Right ventricle myocardium superior (tissue), 1 donor: ENCODE measurements at regions of chrX and their contacts with region 1.

Region 1: GRCh38 chrX:66625525-66625924 is 13.4 kb downstream of the EDA2R start:
- DNase-seq: no peak
- ATAC-seq: no peak

Region 2: GRCh38 chrX:65574356-65574755 is 1051.2 kb before region 1 on chrX:
- intact Hi-C with region 1: loop called (anchors 10 kb)
- DNase-seq: no peak
- ATAC-seq: no peak

Region 3: GRCh38 chrX:66717926-66718325 is 92.4 kb after region 1 on chrX:
- intact Hi-C with region 1: no loop called
- DNase-seq: no peak
- ATAC-seq: no peak

Region 4: GRCh38 chrX:66892004-66892403 is 266.5 kb after region 1 on chrX:
- intact Hi-C with region 1: no loop called
- DNase-seq: no peak
- ATAC-seq: no peak